ENCODE measurements at regions of chr1 and their contacts with region 1.

Region 1: DNA sequence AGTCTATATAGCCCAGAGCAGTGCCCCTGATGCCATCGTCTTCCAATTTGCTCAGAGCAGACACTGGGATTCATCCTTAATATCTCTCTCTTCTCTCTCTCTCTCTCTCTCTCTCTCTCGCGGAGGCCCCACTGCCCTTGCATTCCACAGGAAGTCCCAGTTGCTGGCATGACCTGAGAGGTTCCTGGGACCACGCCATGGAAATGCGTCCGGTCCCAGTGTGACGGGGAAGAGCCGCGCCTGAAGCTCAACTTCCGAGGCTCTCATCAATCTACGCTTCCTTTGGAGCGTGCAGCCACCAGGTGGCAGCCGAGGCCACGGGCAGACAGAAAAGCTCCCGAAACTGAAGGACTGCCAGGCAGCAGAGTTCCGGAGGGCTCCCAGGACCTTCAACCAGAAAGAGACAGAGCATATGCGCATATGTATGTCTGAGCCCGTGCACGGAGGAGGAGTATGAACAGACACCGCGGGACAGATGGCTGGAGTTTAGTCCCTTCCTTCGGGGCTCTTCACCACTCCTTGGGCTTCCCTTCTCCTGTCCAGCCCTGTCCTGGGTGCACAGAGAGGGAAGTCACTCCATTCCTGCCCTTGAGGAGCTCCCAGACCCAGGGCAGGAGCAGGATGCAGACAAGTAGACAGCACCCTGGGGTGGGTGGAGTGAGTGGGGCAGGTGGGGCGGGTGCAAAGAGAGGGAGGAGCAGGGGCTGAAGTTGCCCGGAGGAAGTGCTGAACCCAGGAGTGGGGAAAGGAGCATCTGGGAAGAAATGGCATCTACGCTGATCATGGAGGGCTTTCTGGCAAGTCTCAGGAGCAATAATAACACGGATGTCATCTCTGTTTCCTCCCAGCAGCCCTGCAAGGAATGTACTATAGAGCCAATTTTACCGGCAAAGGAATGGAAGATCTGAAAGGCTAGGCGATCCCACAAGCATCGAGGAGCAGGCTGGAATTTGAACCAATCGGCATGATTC is 10.5 kb downstream of the PDZK1IP1 start:
- DNase-seq: peak; percentile 88 to 89
- ATAC-seq: peak; percentile 87 to 94 (median 90)
- H3K4me3 ChIP-seq: peak overlapping the region in 9 of 10 donors; percentile 27 to 58 (median 49)
- H3K27ac ChIP-seq: no peak overlapping the region
- H3K4me1 ChIP-seq: peaks cover 3 to 19% (median 13%) of the 10 kb centered on the region in 9 donors
- H3K27me3 ChIP-seq: peaks cover 0 to 40% (median 13%) of the 10 kb centered on the region in 7 donors
- CTCF ChIP-seq: peak; percentile 83 to 96 (median 90)

Region 2: GRCh38 chr1:46747683-46748288 is 431.5 kb before region 1 on chr1:
- intact Hi-C with region 1: loop called in 3 of 10 experiments (anchors 5 to 10 kb)
- DNase-seq: peak in 1 of 2 donors; percentile 41
- ATAC-seq: peak; percentile 74 to 87 (median 84)
- H3K4me3 ChIP-seq: no peak overlapping the region
- H3K27ac ChIP-seq: no peak overlapping the region
- H3K4me1 ChIP-seq: no peaks in the 10 kb centered on the region
- H3K27me3 ChIP-seq: peaks cover 0 to 37% (median 4%) of the 10 kb centered on the region in 7 donors
- CTCF ChIP-seq: peak; percentile 57 to 77 (median 71)

Region 3: DNA sequence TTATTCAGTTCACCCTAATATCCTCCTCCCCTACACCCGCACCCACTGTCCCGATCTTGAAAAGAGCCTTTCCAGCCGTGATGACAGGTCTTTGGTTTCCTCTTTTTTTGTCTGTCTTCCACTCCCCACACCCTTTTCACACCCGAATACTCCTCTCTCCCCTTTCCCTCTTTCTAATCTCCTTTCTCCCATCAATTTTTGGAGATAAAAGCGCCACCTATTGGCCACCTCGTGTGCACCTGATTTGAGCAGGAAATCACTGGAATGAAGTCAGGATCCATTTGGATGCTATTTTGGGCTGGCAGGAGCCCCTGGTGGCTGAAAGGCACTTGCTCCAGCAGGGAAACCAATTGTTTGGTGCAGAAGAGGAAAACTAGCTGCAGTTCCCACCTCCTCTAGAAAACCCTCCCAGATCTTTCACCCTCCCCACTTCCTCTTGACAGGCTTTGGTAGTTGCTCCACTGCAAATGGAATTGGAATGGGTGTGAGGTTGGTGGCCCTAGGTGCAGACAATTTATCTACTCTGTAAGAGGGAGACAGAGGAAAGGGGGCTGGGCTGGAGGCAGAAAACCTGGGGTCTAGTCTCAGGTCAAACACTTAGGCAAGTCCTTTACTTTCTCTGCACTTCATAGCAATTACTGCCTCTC is 245.2 kb after region 1 on chr1:
- intact Hi-C with region 1: loop called in 4 of 10 experiments (anchors 5 to 10 kb)
- DNase-seq: no peak
- ATAC-seq: peak in 3 of 8 donors; percentile 33 to 57 (median 51)
- H3K4me3 ChIP-seq: no peak overlapping the region
- H3K27ac ChIP-seq: no peak overlapping the region
- H3K4me1 ChIP-seq: peaks cover 0 to 8% (median 0%) of the 10 kb centered on the region in 9 donors
- H3K27me3 ChIP-seq: peaks cover 0 to 72% (median 48%) of the 10 kb centered on the region in 7 donors
- CTCF ChIP-seq: peak; percentile 38 to 79 (median 64)

Region 4: DNA sequence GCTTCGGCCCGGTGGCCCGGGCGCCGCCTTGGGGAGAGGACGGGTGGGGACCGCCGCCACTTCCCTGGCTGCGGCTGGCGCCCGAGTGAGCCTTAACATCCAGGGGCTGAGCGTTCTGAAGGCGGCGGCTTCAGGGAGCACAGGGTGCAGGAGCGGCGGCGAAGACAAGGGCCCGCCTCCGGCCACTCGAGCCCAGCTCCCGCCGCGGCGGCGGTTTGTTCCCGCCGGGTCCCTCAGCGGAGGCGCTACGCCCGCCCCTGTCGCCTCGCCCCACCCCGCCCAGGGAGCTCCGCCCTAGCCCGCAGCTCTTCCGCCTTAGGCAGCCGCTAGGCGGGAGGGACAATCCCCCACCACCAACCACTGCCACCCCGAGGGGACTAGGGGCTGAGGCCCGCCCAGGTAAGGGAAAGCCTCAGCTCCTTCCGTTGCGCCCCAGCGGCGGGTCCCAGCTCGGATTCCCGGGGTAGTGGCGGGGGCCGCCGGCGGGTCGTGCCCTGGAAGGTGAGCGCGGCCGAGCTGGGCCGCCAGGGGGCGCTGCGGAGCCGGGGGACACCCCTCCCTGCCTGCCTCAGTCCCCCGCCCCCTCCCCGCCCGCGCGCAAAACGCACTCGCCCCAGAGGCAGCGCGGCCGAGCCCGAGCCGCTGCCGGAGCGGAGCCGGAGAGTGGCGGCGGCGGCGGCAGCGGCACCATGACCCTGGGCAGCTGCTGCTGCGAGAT is 258.3 kb after region 1 on chr1 and contains the start of gene FOXD2:
- intact Hi-C with region 1: loop called in 3 of 10 experiments (anchors 5 kb)
- DNase-seq: peak; percentile 83 to 88
- ATAC-seq: peak; percentile 92 to 95 (median 94)
- H3K4me3 ChIP-seq: peak within 1 kb of the TSS; percentile 46 to 87 (median 70)
- H3K27ac ChIP-seq: peak within 1 kb of the TSS in 9 of 10 donors; percentile 36 to 94 (median 74)
- H3K4me1 ChIP-seq: peaks cover 9 to 49% (median 36%) of the 10 kb centered on the region in 9 donors
- H3K27me3 ChIP-seq: peaks cover 23 to 99% (median 94%) of the 10 kb centered on the region in 7 donors
- CTCF ChIP-seq: peak; percentile 95 to 99 (median 98)
- total RNA-seq, gene FOXD2: 0.05 to 0.14 (median 0.07) TPM in 4 of 10 donors, not detected in the others

Region 5: GRCh38 chr1:47725992-47726855 is 546.9 kb after region 1 on chr1:
- intact Hi-C with region 1: loop called in 5 of 10 experiments (anchors 5 to 10 kb)
- DNase-seq: peak; percentile 74 to 78
- ATAC-seq: peak; percentile 81 to 95 (median 90)
- H3K4me3 ChIP-seq: peak overlapping the region in 5 of 10 donors; percentile 10 to 33 (median 22)
- H3K27ac ChIP-seq: no peak overlapping the region
- H3K4me1 ChIP-seq: peaks cover 0 to 20% (median 16%) of the 10 kb centered on the region in 9 donors
- H3K27me3 ChIP-seq: peaks cover 5 to 63% (median 53%) of the 10 kb centered on the region in 7 donors
- CTCF ChIP-seq: peak; percentile 63 to 95 (median 90)